Naive thymus-derived CD4-positive, alpha-beta T cell (primary cell): ENCODE measurements at regions of chr1 and their contacts with region 1.

Region 1: GRCh38 chr1:93437976-93438605 is 9.8 kb upstream of the FNBP1L start:
- DNase-seq: peak in 5 of 9 donors; percentile 24 to 48 (median 27)
- ATAC-seq: peak; percentile 61
- H3K4me3 ChIP-seq: no peak overlapping the region
- H3K4me3 Mint-ChIP-seq: no peak overlapping the region
- H3K27ac ChIP-seq: no peak overlapping the region
- H3K27ac Mint-ChIP-seq: no peak overlapping the region
- H3K4me1 ChIP-seq: no peaks in the 10 kb centered on the region
- H3K4me1 Mint-ChIP-seq: peaks cover 0 to 2% (median 0%) of the 10 kb centered on the region in 7 donors
- H3K27me3 ChIP-seq: peaks cover 0 to 4% of the 10 kb centered on the region in 2 donors
- H3K27me3 Mint-ChIP-seq: peaks cover 0 to 35% (median 7%) of the 10 kb centered on the region in 5 donors

Region 2: DNA sequence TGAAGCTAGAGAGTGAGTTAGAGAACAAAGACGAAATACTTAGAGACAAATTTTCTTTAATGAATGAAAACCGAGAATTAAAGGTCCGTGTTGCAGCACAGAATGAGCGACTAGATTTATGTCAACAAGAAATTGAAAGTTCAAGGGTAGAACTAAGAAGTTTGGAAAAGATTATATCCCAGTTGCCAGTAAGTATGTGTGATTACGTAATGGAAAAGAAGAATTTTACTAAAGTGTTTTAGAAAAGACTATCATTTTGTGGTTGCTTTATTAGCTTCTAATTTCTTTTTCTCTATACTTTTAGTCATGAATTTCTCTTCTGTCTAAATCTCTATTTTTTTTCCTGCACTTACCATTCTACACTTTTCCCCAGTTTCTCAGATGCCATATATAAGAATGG is 230.9 kb before region 1 on chr1:
- CTCF ChIA-PET with region 1: no interaction called
- POLR2A ChIA-PET with region 1: no interaction called
- intact Hi-C with region 1: no loop called
- DNase-seq: no peak
- ATAC-seq: no peak
- H3K4me3 ChIP-seq: no peak overlapping the region
- H3K4me3 Mint-ChIP-seq: no peak overlapping the region
- H3K27ac ChIP-seq: no peak overlapping the region
- H3K27ac Mint-ChIP-seq: no peak overlapping the region
- H3K4me1 ChIP-seq: no peaks in the 10 kb centered on the region
- H3K4me1 Mint-ChIP-seq: no peaks in the 10 kb centered on the region
- H3K27me3 ChIP-seq: no peaks in the 10 kb centered on the region
- H3K27me3 Mint-ChIP-seq: no peaks in the 10 kb centered on the region

Region 3: GRCh38 chr1:93395195-93395594 is 42.9 kb before region 1 on chr1:
- CTCF ChIA-PET with region 1: no interaction called
- POLR2A ChIA-PET with region 1: no interaction called
- intact Hi-C with region 1: no loop called
- DNase-seq: no peak
- ATAC-seq: no peak
- H3K4me3 ChIP-seq: no peak overlapping the region
- H3K4me3 Mint-ChIP-seq: no peak overlapping the region
- H3K27ac ChIP-seq: no peak overlapping the region
- H3K27ac Mint-ChIP-seq: no peak overlapping the region
- H3K4me1 ChIP-seq: no peaks in the 10 kb centered on the region
- H3K4me1 Mint-ChIP-seq: no peaks in the 10 kb centered on the region
- H3K27me3 ChIP-seq: no peaks in the 10 kb centered on the region
- H3K27me3 Mint-ChIP-seq: peaks cover 0 to 16% (median 0%) of the 10 kb centered on the region in 5 donors

Region 4: DNA sequence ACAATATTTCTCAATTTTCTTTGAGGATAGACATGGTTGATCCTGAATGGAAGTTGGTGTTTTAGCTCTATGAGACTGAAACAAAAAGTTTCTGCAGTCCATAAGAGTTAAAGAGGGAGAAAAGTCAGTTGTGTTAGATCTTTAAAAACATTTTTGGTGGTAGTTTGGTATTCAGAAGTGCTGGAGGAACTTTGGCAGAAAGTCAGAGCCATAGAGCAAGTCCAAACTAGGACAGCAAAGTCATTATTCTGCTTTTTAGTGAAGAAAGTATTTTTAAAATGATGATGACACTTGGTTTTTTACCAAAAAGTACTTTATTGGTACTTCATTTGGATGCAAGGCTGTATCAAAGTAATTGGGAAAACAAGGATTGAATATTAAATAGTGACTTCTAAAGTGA is 51.7 kb after region 1 on chr1:
- CTCF ChIA-PET with region 1: no interaction called
- POLR2A ChIA-PET with region 1: no interaction called
- intact Hi-C with region 1: no loop called
- DNase-seq: no peak
- ATAC-seq: no peak
- H3K4me3 ChIP-seq: no peak overlapping the region
- H3K4me3 Mint-ChIP-seq: no peak overlapping the region
- H3K27ac ChIP-seq: no peak overlapping the region
- H3K27ac Mint-ChIP-seq: no peak overlapping the region
- H3K4me1 ChIP-seq: no peaks in the 10 kb centered on the region
- H3K4me1 Mint-ChIP-seq: no peaks in the 10 kb centered on the region
- H3K27me3 ChIP-seq: no peaks in the 10 kb centered on the region
- H3K27me3 Mint-ChIP-seq: peaks cover 0 to 27% (median 15%) of the 10 kb centered on the region in 5 donors

Region 5: DNA sequence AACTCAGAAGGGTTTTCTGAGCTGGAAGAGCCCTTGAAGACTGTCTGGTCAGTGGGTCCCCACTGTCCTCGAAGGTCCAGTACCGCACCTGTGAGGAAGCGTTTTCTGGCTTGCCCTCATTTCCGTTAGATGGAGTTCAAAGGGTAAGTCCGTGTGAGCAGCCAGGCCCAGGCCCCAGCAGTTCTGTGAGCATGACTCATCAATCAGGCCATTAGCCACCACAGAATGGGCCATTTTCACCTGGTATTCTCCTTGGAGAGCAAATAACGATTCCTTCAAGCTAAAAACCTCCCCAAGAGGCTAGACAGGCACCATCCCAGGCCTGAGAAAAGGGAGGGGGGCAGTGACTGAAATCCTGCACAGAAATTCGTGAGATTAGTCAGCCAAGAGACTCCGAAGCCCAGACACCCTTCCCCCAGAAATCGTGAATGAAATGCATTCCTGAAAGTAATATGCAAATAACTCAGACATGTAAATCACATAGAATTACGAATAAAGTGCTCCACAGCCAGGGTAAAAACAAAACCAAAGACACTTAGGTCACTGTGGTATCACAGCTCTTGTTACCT is 177.6 kb after region 1 on chr1:
- CTCF ChIA-PET with region 1: no interaction called
- POLR2A ChIA-PET with region 1: no interaction called
- intact Hi-C with region 1: loop called in 1 of 2 experiments (anchors 10 kb)
- DNase-seq: peak in 1 of 9 donors; percentile 46
- ATAC-seq: no peak
- H3K4me3 ChIP-seq: no peak overlapping the region
- H3K4me3 Mint-ChIP-seq: peak overlapping the region in 1 of 10 donors; percentile 29
- H3K27ac ChIP-seq: no peak overlapping the region
- H3K27ac Mint-ChIP-seq: no peak overlapping the region
- H3K4me1 ChIP-seq: peaks cover 0 to 11% of the 10 kb centered on the region in 2 donors
- H3K4me1 Mint-ChIP-seq: peaks cover 0 to 10% (median 0%) of the 10 kb centered on the region in 7 donors
- H3K27me3 ChIP-seq: no peaks in the 10 kb centered on the region
- H3K27me3 Mint-ChIP-seq: peaks cover 0 to 21% (median 0%) of the 10 kb centered on the region in 5 donors

Region 6: GRCh38 chr1:93814059-93814794 is 376.1 kb after region 1 on chr1:
- CTCF ChIA-PET with region 1: interaction called, 4 read pairs
- POLR2A ChIA-PET with region 1: no interaction called
- intact Hi-C with region 1: loop called in 1 of 2 experiments (anchors 1 kb)
- DNase-seq: peak in 8 of 9 donors; percentile 18 to 55 (median 36)
- ATAC-seq: peak; percentile 70
- H3K4me3 ChIP-seq: no peak overlapping the region
- H3K4me3 Mint-ChIP-seq: no peak overlapping the region
- H3K27ac ChIP-seq: no peak overlapping the region
- H3K27ac Mint-ChIP-seq: no peak overlapping the region
- H3K4me1 ChIP-seq: peaks cover 0 to 11% of the 10 kb centered on the region in 2 donors
- H3K4me1 Mint-ChIP-seq: peaks cover 19 to 23% (median 21%) of the 10 kb centered on the region in 7 donors
- H3K27me3 ChIP-seq: no peaks in the 10 kb centered on the region
- H3K27me3 Mint-ChIP-seq: peaks cover 0 to 2% (median 0%) of the 10 kb centered on the region in 5 donors

Region 7: DNA sequence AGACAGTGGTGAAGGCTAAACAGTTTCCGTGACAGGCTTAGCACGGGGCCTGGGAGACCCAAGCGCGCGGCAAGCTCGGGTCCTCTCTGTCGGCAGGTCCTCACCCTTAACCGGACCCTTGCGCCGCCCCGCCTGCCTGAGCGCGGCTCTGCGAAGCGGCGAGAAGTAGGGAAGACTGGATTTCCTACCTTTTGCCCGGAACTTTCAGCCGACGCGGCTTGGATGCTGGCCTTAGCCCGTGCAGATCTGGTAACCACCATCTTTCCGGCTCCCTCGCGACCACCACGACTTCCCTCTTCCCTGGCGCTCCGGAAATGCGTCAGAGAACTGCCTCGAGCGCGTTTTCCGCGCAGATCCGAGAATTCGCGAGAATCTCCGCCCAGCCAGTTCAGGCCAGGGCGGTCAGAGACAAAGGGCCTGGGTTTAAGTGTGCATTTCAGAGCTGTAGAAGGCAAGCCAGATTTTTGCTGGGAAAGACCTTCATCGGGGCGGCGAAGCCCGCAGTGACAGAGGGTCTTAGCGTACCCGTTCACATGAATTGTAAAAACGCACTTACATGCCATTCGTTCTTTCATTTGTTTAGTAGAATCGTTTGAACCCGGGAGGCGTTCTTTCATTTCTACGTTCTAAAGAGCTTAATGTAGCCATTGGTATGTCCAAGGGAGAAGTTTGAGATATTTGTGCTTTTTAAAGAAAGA is 440.9 kb after region 1 on chr1 and contains the start of gene DNTTIP2:
- CTCF ChIA-PET with region 1: no interaction called
- POLR2A ChIA-PET with region 1: no interaction called
- intact Hi-C with region 1: loop called (anchors 1 kb)
- DNase-seq: peak; percentile 73 to 89 (median 86)
- ATAC-seq: peak; percentile 90
- H3K4me3 ChIP-seq: peak within 1 kb of the TSS; percentile 83
- H3K4me3 Mint-ChIP-seq: peak within 1 kb of the TSS; percentile 92 to 99 (median 97)
- H3K27ac ChIP-seq: peak within 1 kb of the TSS; percentile 94
- H3K27ac Mint-ChIP-seq: peak within 1 kb of the TSS; percentile 96 to 99 (median 98)
- H3K4me1 ChIP-seq: peaks cover 21 to 25% of the 10 kb centered on the region in 2 donors
- H3K4me1 Mint-ChIP-seq: peaks cover 34 to 62% (median 54%) of the 10 kb centered on the region in 7 donors
- H3K27me3 ChIP-seq: no peaks in the 10 kb centered on the region
- H3K27me3 Mint-ChIP-seq: no peaks in the 10 kb centered on the region
- total RNA-seq, gene DNTTIP2: 51.8 to 84.2 (median 77.5) TPM